ENCODE measurements at regions of chr2 and their contacts with region 1.

Region 1: GRCh38 chr2:112048887-112049286 is 6.2 kb upstream of the TMEM87B start:
- DNase-seq: no peak
- ATAC-seq: peak; percentile 70 to 84
- H3K4me3 ChIP-seq: no peak overlapping the region
- H3K27ac ChIP-seq: no peak overlapping the region
- H3K4me1 ChIP-seq: peaks cover 0 to 5% of the 10 kb centered on the region in 2 donors
- H3K27me3 ChIP-seq: no peaks in the 10 kb centered on the region
- CTCF ChIP-seq: peak; percentile 63 to 85 (median 73)
- POLR2A ChIP-seq: no peak

Region 2: DNA sequence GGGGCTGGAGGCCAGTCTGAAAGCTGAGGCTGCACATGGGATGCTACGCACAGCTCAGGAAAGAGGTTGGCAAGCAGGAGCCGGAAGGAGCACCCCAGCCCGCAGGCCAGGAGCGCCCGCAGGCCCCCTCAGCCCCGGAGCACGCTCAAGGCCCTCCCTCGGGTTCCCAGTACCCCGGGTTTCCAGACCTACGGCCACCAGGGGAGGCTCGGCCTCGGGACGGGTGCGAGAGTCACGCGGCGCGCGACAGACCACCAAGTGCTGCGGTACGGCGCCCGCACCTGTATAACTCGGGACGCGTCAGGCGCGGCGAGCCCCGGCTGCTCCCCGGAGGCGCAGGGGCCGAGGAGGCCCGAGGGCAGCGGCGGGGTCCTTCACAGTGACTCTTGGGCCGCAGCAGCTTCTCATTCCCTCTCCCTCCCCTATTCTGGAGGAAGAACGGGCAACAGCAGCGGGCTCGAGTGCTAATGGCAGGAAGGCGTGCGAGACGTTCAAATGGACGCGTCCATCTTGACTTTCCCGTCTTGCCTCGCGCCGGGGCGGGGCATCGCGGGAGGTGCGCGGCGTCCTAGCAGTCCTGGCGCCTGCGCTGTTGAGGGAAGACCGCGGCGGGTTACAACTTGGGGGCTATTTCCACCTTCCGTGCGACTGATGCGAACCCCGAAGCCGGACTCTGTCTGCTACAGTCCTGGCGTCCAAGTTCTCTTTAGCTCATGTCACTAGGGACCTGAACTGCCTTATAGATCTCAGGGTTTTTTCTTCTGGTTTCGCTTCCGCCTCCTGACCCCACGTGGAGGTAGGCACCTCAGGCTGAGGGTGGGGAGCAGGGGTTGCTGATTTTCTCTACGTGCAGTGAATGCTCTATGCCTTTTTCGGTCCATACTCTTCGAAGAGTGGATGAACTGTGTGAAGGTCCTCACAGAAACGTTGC is 165.0 kb before region 1 on chr2 and contains the start of gene ANAPC1:
- in situ Hi-C with region 1: loop called in 1 of 4 experiments (anchors 5 kb)
- intact Hi-C with region 1: loop called (anchors 1 kb)
- DNase-seq: peak; percentile 64 to 67
- ATAC-seq: peak; percentile 97 to 98
- H3K4me3 ChIP-seq: peak within 1 kb of the TSS; percentile 79 to 98 (median 91)
- H3K27ac ChIP-seq: peak within 1 kb of the TSS; percentile 83 to 89 (median 86)
- H3K4me1 ChIP-seq: peaks cover 7 to 18% of the 10 kb centered on the region in 2 donors
- H3K27me3 ChIP-seq: no peaks in the 10 kb centered on the region
- CTCF ChIP-seq: no peak
- POLR2A ChIP-seq: peak; percentile 42 to 57
- total RNA-seq, gene ANAPC1: 28.3 to 33.9 (median 30.8) TPM

Region 3: DNA sequence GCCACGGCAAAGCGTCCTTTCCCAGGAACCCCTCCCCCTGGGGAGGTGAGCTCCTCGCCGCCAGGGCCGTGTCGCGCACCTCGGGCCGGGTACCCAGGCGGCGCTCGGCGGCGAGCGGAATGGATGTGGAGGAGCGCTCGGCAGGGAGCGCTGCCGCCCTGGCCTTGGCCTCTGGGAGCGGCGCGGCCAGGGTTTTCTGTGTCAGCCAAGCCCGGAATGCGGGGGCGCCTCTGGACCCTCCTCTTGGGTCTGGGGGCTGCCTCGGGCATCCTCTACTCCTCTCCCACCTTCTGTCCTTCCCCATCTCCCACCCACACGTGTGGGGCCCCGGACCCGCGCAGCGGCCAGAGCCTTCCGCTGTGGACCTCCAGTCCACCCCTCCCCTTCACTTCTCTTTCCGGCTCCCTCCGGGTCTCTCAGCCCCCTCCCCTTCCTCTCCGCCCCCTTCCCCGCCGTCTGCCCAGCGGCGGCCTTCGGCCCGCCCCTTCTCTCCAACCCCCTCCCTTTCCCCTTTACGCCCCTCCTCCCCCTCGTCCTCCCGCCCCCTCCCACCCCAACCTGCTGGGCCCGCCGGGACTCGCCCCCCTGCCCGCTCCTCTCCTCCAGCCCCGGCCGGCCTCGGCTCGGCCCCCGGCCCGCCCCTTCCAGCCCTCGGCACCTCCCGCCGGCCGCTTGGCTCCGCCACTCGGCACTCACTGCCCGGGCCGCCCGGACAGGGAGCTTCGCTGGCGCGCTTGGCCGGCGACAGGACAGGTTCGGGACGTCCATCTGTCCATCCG is 150.8 kb before region 1 on chr2 and contains the start of gene MERTK:
- in situ Hi-C with region 1: loop called in 3 of 4 experiments (anchors 5 kb)
- intact Hi-C with region 1: loop called (anchors 2 kb)
- DNase-seq: peak; percentile 45 to 48
- ATAC-seq: peak; percentile 63 to 80
- H3K4me3 ChIP-seq: peak within 1 kb of the TSS; percentile 68 to 77 (median 72)
- H3K27ac ChIP-seq: peak within 1 kb of the TSS; percentile 61 to 81 (median 72)
- H3K4me1 ChIP-seq: peaks cover 0 to 9% of the 10 kb centered on the region in 2 donors
- H3K27me3 ChIP-seq: peaks cover 10 to 28% (median 12%) of the 10 kb centered on the region in 3 donors
- CTCF ChIP-seq: peak; percentile 32 to 69 (median 57)
- POLR2A ChIP-seq: peak; percentile 36 to 50
- total RNA-seq, gene MERTK: 2.4 to 5.7 (median 3.7) TPM

Region 4: DNA sequence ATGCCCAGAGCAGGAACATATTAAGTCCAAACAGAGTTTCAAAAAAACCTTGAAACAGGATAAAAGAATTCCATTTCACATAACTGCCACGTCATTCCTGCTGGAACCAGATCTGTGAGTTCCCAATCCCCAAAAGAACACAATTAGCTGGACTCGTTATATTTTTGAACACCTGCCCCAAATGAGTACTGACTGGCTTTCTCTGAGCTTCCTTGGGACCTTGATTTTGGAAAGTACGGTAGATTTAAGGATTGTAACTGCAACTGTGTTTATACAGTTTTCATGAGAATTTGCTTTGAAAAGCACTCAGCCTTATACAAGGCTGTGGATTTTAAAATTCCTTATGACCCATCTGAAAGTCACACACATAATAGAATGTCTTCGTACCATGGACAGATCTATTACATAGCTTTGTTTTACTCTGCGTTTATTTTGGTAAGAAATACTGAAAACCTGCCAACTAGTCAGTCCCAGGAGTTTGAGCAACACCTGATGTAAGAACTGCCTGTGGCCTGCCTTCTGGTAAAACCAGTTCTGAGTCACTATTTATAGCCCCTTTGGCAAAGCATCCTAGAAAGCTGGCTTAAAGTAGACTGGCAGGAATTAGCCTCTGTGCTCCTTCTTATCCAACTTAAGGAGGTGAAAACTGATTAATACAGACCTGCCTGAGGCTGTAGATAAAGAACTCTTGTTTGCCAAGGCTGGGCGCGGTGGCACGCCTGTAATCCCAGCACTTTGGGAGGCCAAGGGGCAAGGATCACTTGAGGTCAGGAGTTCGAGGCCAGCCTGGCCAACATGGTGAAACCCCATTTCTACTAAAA is 102.4 kb before region 1 on chr2:
- in situ Hi-C with region 1: no loop called
- intact Hi-C with region 1: loop called (anchors 2 kb)
- DNase-seq: peak; percentile 53 to 69
- ATAC-seq: peak; percentile 99 to 100
- H3K4me3 ChIP-seq: no peak overlapping the region
- H3K27ac ChIP-seq: peak overlapping the region; percentile 65 to 74 (median 72)
- H3K4me1 ChIP-seq: peaks cover 10 to 19% of the 10 kb centered on the region in 2 donors
- H3K27me3 ChIP-seq: no peaks in the 10 kb centered on the region
- CTCF ChIP-seq: no peak
- POLR2A ChIP-seq: no peak

Measured in gastrocnemius medialis (tissue), 4 donors.